GM12878 (cell line): ENCODE measurements at regions of chr4 and their contacts with region 1.

Region 1: GRCh38 chr4:145097821-145098674 is at the starts of genes ABCE1 and ANAPC10:
- DNase-seq: peak; percentile 87
- ATAC-seq: peak; percentile 83
- H3K4me3 ChIP-seq: peak within 1 kb of the TSS; percentile 94
- H3K27ac ChIP-seq: peak within 1 kb of the TSS; percentile 86
- H3K4me1 ChIP-seq: peaks cover 10% of the 10 kb centered on the region
- H3K27me3 ChIP-seq: no peaks in the 10 kb centered on the region
- CTCF ChIP-seq: no peak; a peak in 1 of 6 replicates
- EP300 ChIP-seq: peak in 1 of 2 experiments; percentile 58; a peak in 1 of 4 replicates
- POLR2A ChIP-seq: peak; percentile 95
- RAD21 ChIP-seq: no peak
- polyA plus RNA-seq, gene ABCE1: 75.9 to 108 TPM
- polyA plus RNA-seq, gene ANAPC10: 60.2 to 73.7 TPM

Region 2: DNA sequence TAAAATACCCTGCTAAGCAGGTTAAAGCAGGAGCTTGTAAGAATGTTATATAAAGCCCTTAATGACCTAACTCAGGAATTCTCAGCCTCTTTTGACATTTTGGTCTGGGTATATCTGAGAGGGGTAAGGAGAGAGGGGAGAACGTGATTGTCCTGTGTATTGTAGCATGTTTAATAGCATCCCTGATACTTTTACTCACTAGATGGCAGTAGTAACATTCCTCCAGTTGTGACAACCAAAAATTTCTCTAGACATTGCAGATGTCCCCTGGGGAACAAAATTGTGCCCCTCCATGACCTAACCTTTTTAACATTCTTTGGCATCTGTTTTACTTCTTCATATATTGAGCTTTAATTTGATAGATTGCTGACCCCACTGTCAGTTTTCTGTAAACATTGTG is 1566.7 kb before region 1 on chr4:
- CTCF ChIA-PET with region 1: no interaction called
- POLR2A ChIA-PET with region 1: no interaction called
- RAD21 ChIA-PET with region 1: no interaction called
- SMC1A ChIA-PET with region 1: no interaction called
- in situ Hi-C with region 1: loop called (anchors 25 kb)
- intact Hi-C with region 1: no loop called
- DNase-seq: no peak
- ATAC-seq: peak; percentile 62
- H3K4me3 ChIP-seq: no peak overlapping the region
- H3K27ac ChIP-seq: no peak overlapping the region
- H3K4me1 ChIP-seq: no peaks in the 10 kb centered on the region
- H3K27me3 ChIP-seq: no peaks in the 10 kb centered on the region
- CTCF ChIP-seq: peak; percentile 31 to 40 (median 34); a peak in 4 of 6 replicates
- EP300 ChIP-seq: no peak
- POLR2A ChIP-seq: no peak
- RAD21 ChIP-seq: peak; percentile 25; the same call in 1 of the 2 replicates

Region 3: DNA sequence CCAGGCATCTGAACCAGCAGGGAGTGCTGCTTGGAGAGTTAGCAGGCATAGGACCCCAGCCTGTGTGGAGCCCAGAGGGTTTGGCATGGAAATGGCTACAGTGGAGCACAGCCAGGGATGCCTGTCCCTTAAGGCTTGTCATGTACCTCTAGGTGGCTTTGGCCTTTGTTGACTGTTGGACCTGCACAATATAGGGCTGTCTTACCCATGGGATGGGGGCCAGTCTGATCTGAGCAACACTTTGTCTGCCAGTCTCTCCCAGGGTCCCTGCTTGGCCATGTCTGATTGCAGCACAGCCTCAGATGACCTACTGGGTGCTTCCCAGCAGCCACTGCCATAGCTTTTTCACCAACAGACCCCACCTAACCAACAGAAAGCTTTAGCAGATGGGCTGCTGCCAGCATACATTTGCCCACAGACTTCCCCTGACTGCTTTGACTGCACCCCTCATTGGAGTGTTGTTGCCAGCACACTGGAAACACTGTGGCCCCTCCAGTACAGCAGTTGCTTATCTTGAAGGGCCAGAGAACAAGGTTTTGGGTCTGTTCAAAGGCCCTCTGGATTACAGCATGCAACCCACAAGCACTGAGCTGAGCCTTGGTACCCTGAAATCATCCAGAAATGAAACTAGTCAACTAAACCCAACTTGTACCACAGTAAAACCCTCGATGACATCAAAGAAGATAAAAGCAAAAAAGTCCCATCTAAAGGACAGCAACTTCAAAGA is 22.1 kb before region 1 on chr4:
- CTCF ChIA-PET with region 1: interaction called, 4 read pairs
- POLR2A ChIA-PET with region 1: interaction called, 4 read pairs
- RAD21 ChIA-PET with region 1: no interaction called
- SMC1A ChIA-PET with region 1: interaction called, 11 read pairs
- in situ Hi-C with region 1: no loop called
- intact Hi-C with region 1: no loop called
- DNase-seq: no peak
- ATAC-seq: peak; percentile 84
- H3K4me3 ChIP-seq: no peak overlapping the region
- H3K27ac ChIP-seq: no peak overlapping the region
- H3K4me1 ChIP-seq: no peaks in the 10 kb centered on the region; the same call in 1 of the 2 replicates
- H3K27me3 ChIP-seq: no peaks in the 10 kb centered on the region
- CTCF ChIP-seq: no peak
- EP300 ChIP-seq: no peak
- POLR2A ChIP-seq: no peak
- RAD21 ChIP-seq: no peak

Region 4: GRCh38 chr4:145083891-145084605 is 14.0 kb before region 1 on chr4:
- CTCF ChIA-PET with region 1: interaction called, 30 read pairs
- POLR2A ChIA-PET with region 1: interaction called, 4 read pairs
- RAD21 ChIA-PET with region 1: interaction called, 3 read pairs
- SMC1A ChIA-PET with region 1: interaction called, 9 read pairs
- in situ Hi-C with region 1: no loop called
- intact Hi-C with region 1: no loop called
- DNase-seq: no peak
- ATAC-seq: peak; percentile 52
- H3K4me3 ChIP-seq: no peak overlapping the region
- H3K27ac ChIP-seq: no peak overlapping the region
- H3K4me1 ChIP-seq: no peaks in the 10 kb centered on the region
- H3K27me3 ChIP-seq: no peaks in the 10 kb centered on the region
- CTCF ChIP-seq: no peak
- EP300 ChIP-seq: no peak
- POLR2A ChIP-seq: no peak
- RAD21 ChIP-seq: no peak

Region 5: DNA sequence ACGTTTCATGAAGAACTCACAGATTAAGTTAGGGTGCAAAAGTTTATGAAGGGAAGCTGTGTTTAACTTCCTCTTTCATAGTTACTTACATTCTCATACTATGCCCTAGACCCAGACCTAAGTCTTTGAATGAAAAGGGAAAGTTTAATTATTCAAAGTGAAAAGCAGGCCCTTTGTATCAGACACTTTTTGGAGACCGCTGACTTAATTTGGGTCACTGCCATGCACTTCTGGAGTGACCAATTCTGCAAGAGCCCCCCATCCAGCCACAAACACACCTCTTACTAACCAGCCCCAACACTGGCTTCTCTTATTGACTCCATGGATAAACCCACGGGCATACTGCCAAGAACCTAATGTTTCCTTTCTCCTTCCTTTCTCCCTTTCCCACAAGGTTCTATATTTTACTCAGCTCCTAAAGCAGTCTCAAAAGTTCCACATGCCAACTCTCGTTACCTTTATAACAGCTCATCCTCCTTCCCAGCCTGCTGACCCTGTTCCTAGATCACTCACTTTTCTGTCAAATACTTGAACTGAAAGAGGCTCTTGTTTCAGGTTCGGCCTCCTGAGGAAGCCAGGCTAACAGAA is 34.6 kb after region 1 on chr4:
- CTCF ChIA-PET with region 1: no interaction called
- POLR2A ChIA-PET with region 1: interaction called, 10 read pairs
- RAD21 ChIA-PET with region 1: interaction called, 7 read pairs
- SMC1A ChIA-PET with region 1: interaction called, 14 read pairs
- in situ Hi-C with region 1: no loop called
- intact Hi-C with region 1: no loop called
- DNase-seq: peak; percentile 53
- ATAC-seq: peak; percentile 91
- H3K4me3 ChIP-seq: peak overlapping the region; percentile 16; the same call in 1 of the 2 replicates
- H3K27ac ChIP-seq: peak overlapping the region; percentile 76
- H3K4me1 ChIP-seq: peaks cover 28% of the 10 kb centered on the region
- H3K27me3 ChIP-seq: no peaks in the 10 kb centered on the region
- CTCF ChIP-seq: no peak
- EP300 ChIP-seq: peak; percentile 11 to 25; a peak in 1 of 4 replicates
- POLR2A ChIP-seq: no peak
- RAD21 ChIP-seq: no peak

Region 6: GRCh38 chr4:145773581-145774234 is 675.7 kb after region 1 on chr4:
- CTCF ChIA-PET with region 1: no interaction called
- POLR2A ChIA-PET with region 1: no interaction called
- RAD21 ChIA-PET with region 1: no interaction called
- SMC1A ChIA-PET with region 1: no interaction called
- in situ Hi-C with region 1: no loop called
- intact Hi-C with region 1: no loop called
- DNase-seq: peak; percentile 37
- ATAC-seq: peak; percentile 92
- H3K4me3 ChIP-seq: no peak overlapping the region; the same call in 1 of the 2 replicates
- H3K27ac ChIP-seq: peak overlapping the region; percentile 38; the same call in 1 of the 2 replicates
- H3K4me1 ChIP-seq: peaks cover 35% of the 10 kb centered on the region
- H3K27me3 ChIP-seq: no peaks in the 10 kb centered on the region
- CTCF ChIP-seq: no peak
- EP300 ChIP-seq: no peak; a peak in 1 of 4 replicates
- POLR2A ChIP-seq: no peak
- RAD21 ChIP-seq: no peak